HCT116 (cell line): ENCODE measurements at regions of chr19 and their contacts with region 1.

Region 1: DNA sequence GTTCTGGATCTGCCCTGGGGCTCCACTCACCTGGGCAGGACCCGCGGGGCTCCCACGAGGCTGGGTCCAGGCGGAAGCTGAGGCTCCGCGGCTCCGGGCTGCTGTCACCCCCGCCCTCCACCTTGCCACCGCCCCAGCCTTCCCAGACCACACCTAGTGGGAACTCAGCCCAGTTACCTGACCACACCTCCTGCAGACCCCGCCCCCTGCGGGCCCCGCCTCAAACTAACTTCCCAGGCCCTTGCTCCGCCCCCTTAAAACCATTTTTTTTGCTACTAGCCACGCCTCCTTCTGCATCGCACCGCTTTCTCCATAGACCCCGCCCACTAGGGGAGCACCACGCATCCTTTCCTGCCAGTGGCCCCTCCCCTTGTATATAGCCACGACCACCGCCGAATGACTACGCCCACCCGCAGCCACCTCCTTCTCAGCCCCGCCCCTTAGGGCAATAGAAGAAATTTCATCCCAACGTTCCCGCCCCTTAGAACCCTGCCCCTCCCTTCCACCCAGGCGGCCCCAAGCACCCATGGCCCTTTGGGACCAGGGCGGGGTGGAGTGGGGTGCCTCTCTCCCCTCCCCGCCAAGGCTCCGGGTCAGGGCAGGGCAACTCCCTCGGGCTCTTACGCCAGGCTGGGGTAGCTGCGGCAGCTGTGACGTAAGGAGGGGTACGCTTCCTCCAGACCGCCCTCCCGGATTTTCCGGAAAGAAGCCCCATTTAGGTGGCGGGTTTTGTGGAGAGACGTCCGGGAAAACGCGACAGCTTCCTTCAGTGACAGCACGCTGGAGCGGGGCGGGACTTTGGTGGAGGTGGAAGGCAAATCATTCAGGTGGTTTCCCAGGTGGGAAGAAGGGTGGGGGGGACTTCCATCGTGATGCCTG is at the start of gene SH2D3A:
- DNase-seq: peak; percentile 96
- ATAC-seq: peak; percentile 81
- H3K4me3 ChIP-seq: peak within 1 kb of the TSS; percentile 71 to 96
- H3K27ac ChIP-seq: peak within 1 kb of the TSS; percentile 93
- H3K4me1 ChIP-seq: peaks cover 24 to 50% of the 10 kb centered on the region in 2 experiments
- H3K27me3 ChIP-seq: no peaks in the 10 kb centered on the region
- CTCF ChIP-seq: 0 out of 6 replicates have a peak, but pooled peaks of 1 of the 3 experiments have one; percentile 0
- POLR2A ChIP-seq: no peak
- RAD21 ChIP-seq: no peak
- total RNA-seq, gene SH2D3A: 75.7 TPM

Region 2: DNA sequence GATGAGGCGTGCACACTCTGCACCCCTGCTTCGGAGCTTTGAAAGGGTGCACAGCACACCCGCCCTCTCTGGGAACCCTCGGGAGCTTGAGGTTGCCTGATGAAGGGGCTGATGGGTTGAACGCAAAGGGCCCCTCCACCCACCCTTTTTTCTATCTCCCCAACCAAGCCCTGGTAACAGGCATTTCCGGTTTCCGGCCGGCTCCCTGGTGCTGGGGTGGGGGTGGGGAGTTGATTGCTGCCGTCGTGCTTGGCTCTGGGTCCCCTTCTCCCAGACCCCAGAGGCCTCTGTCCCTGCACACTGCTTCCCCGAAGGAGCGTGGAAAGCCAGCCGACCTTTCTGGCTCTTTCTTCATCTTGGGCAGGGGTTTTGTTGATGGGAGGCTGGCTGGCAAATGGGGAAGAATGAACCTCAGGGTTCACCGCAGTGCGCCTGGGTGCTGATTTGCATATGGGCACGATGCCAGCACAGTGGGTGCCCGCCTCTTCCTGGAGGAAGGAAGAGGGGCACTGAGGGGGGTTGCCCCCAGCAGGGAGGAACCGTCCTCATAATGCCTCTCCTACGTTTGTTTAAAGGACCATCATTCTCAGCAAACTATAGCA is 34.0 kb after region 1 on chr19:
- CTCF ChIA-PET with region 1: interaction called, 3 read pairs
- POLR2A ChIA-PET with region 1: interaction called, 3 read pairs
- RAD21 ChIA-PET with region 1: no interaction called
- intact Hi-C with region 1: loop called (anchors 2 kb)
- DNase-seq: peak; percentile 56
- ATAC-seq: peak; percentile 78
- H3K4me3 ChIP-seq: peak overlapping the region; percentile 62 to 79
- H3K27ac ChIP-seq: peak overlapping the region; percentile 95
- H3K4me1 ChIP-seq: peaks cover 16 to 29% of the 10 kb centered on the region in 2 experiments
- H3K27me3 ChIP-seq: no peaks in the 10 kb centered on the region
- CTCF ChIP-seq: no peak
- POLR2A ChIP-seq: peak; percentile 66
- RAD21 ChIP-seq: no peak

Region 3: GRCh38 chr19:6828698-6829562 is 61.3 kb after region 1 on chr19:
- CTCF ChIA-PET with region 1: no interaction called
- POLR2A ChIA-PET with region 1: no interaction called
- RAD21 ChIA-PET with region 1: interaction called in 1 of 2 experiments, 4 read pairs
- intact Hi-C with region 1: loop called (anchors 2 kb)
- DNase-seq: peak; percentile 98
- ATAC-seq: peak; percentile 84
- H3K4me3 ChIP-seq: peak overlapping the region; percentile 79 to 84
- H3K27ac ChIP-seq: peak overlapping the region; percentile 67
- H3K4me1 ChIP-seq: peaks cover 14 to 24% of the 10 kb centered on the region in 2 experiments
- H3K27me3 ChIP-seq: no peaks in the 10 kb centered on the region
- CTCF ChIP-seq: no peak
- POLR2A ChIP-seq: no peak
- RAD21 ChIP-seq: no peak

Region 4: DNA sequence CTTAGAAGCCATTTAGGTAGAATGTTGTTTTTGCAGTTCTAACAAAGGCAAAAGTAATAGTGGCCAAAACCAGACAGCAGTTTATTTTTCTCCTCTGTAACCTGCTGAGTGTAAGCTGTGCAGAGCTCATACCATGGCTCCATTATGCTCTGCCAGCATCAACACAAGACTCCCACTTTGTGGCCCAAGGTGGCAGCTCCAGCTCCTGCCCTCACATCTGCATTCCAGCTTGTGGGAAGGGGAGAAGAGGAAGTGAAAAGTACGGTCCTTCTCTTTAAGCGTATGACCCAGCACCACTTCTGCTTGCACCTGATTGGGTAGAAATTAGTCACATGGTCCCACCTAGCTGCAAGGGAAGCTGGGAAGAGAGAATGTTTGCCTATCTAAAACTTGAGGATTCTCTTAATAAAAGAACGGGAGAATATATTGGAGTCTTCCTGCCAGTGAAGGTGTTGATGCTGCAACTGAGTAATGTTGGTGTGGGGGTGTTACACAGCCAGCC is 139.0 kb after region 1 on chr19:
- CTCF ChIA-PET with region 1: no interaction called
- POLR2A ChIA-PET with region 1: no interaction called
- RAD21 ChIA-PET with region 1: no interaction called
- intact Hi-C with region 1: no loop called
- DNase-seq: no peak
- ATAC-seq: no peak
- H3K4me3 ChIP-seq: no peak overlapping the region
- H3K27ac ChIP-seq: no peak overlapping the region
- H3K4me1 ChIP-seq: no peaks in the 10 kb centered on the region
- H3K27me3 ChIP-seq: no peaks in the 10 kb centered on the region
- CTCF ChIP-seq: no peak
- POLR2A ChIP-seq: no peak
- RAD21 ChIP-seq: no peak

Region 5: DNA sequence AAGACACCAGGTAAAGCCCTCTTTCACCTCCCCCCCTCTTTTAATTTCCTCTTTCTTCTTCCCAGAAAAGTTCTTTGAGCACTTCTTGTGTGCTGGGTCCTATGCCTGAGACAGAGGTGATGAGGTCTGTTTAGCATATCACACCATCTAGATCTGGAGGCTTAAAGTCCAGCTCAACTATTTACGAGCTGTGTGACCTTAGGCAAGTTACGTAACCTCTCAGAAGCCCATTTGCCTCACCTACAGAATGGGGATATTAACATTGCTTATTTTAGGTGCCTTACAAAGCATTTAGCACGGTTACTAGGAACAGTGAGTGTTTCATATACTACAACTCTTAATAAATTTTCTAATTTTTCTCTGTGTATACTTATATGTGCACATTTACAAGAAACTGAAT is 167.5 kb after region 1 on chr19:
- CTCF ChIA-PET with region 1: no interaction called
- POLR2A ChIA-PET with region 1: no interaction called
- RAD21 ChIA-PET with region 1: no interaction called
- intact Hi-C with region 1: no loop called
- DNase-seq: no peak
- ATAC-seq: no peak
- H3K4me3 ChIP-seq: no peak overlapping the region
- H3K27ac ChIP-seq: no peak overlapping the region
- H3K4me1 ChIP-seq: no peaks in the 10 kb centered on the region
- H3K27me3 ChIP-seq: no peaks in the 10 kb centered on the region
- CTCF ChIP-seq: no peak
- POLR2A ChIP-seq: no peak
- RAD21 ChIP-seq: no peak